ENCODE measurements at regions of chr15 and their contacts with region 1.

Region 1: GRCh38 chr15:66851226-66852071 is 149.4 kb downstream of the SMAD6 start:
- DNase-seq: peak; percentile 86
- H3K4me3 ChIP-seq: no peak overlapping the region
- H3K27ac ChIP-seq: peak overlapping the region in 3 of 4 donors; percentile 39 to 55 (median 49)
- H3K4me1 ChIP-seq: peaks cover 7 to 22% (median 12%) of the 10 kb centered on the region in 4 donors
- H3K27me3 ChIP-seq: no peaks in the 10 kb centered on the region
- CTCF ChIP-seq: peak; percentile 96 to 98 (median 97)
- EP300 ChIP-seq: no peak
- POLR2A ChIP-seq: no peak

Region 2: GRCh38 chr15:66535016-66535415 is 316.4 kb before region 1 on chr15:
- in situ Hi-C with region 1: no loop called
- intact Hi-C with region 1: no loop called
- DNase-seq: no peak
- H3K4me3 ChIP-seq: no peak overlapping the region
- H3K27ac ChIP-seq: no peak overlapping the region
- H3K4me1 ChIP-seq: peaks cover 0 to 8% (median 0%) of the 10 kb centered on the region in 4 donors
- H3K27me3 ChIP-seq: no peaks in the 10 kb centered on the region
- CTCF ChIP-seq: no peak
- EP300 ChIP-seq: no peak
- POLR2A ChIP-seq: no peak

Region 3: GRCh38 chr15:66595931-66596545 is 255.4 kb before region 1 on chr15:
- in situ Hi-C with region 1: loop called in 2 of 4 experiments (anchors 10 kb)
- intact Hi-C with region 1: loop called (anchors 5 kb)
- DNase-seq: no peak
- H3K4me3 ChIP-seq: no peak overlapping the region
- H3K27ac ChIP-seq: no peak overlapping the region
- H3K4me1 ChIP-seq: no peaks in the 10 kb centered on the region
- H3K27me3 ChIP-seq: no peaks in the 10 kb centered on the region
- CTCF ChIP-seq: no peak
- EP300 ChIP-seq: no peak
- POLR2A ChIP-seq: no peak

Region 4: GRCh38 chr15:66603301-66604179 is 247.9 kb before region 1 on chr15:
- in situ Hi-C with region 1: loop called in 2 of 4 experiments (anchors 10 kb)
- intact Hi-C with region 1: loop called (anchors 5 kb)
- DNase-seq: peak; percentile 67
- H3K4me3 ChIP-seq: no peak overlapping the region
- H3K27ac ChIP-seq: no peak overlapping the region
- H3K4me1 ChIP-seq: no peaks in the 10 kb centered on the region
- H3K27me3 ChIP-seq: no peaks in the 10 kb centered on the region
- CTCF ChIP-seq: peak; percentile 68 to 87 (median 83)
- EP300 ChIP-seq: no peak
- POLR2A ChIP-seq: no peak

Region 5: GRCh38 chr15:66619151-66619903 is 232.1 kb before region 1 on chr15:
- in situ Hi-C with region 1: no loop called
- intact Hi-C with region 1: loop called (anchors 5 kb)
- DNase-seq: peak; percentile 84
- H3K4me3 ChIP-seq: no peak overlapping the region
- H3K27ac ChIP-seq: peak overlapping the region; percentile 8 to 82 (median 58)
- H3K4me1 ChIP-seq: peaks cover 10 to 52% (median 36%) of the 10 kb centered on the region in 4 donors
- H3K27me3 ChIP-seq: peaks cover 6% of the 10 kb centered on the region
- CTCF ChIP-seq: peak; percentile 86 to 94 (median 92)
- EP300 ChIP-seq: no peak
- POLR2A ChIP-seq: no peak

Region 6: GRCh38 chr15:66700802-66701421 is 150.5 kb before region 1 on chr15:
- in situ Hi-C with region 1: no loop called
- intact Hi-C with region 1: loop called (anchors 5 kb)
- DNase-seq: peak; percentile 97
- H3K4me3 ChIP-seq: peak overlapping the region; percentile 59 to 78 (median 73)
- H3K27ac ChIP-seq: peak overlapping the region; percentile 84 to 92 (median 91)
- H3K4me1 ChIP-seq: peaks cover 3 to 39% (median 31%) of the 10 kb centered on the region in 4 donors
- H3K27me3 ChIP-seq: no peaks in the 10 kb centered on the region
- CTCF ChIP-seq: no peak
- EP300 ChIP-seq: no peak
- POLR2A ChIP-seq: no peak

Region 7: GRCh38 chr15:66774001-66774814 is 77.2 kb before region 1 on chr15:
- in situ Hi-C with region 1: no loop called
- intact Hi-C with region 1: loop called (anchors 5 kb)
- DNase-seq: peak; percentile 91
- H3K4me3 ChIP-seq: no peak overlapping the region
- H3K27ac ChIP-seq: peak overlapping the region; percentile 77 to 82 (median 78)
- H3K4me1 ChIP-seq: peaks cover 34 to 69% (median 56%) of the 10 kb centered on the region in 4 donors
- H3K27me3 ChIP-seq: no peaks in the 10 kb centered on the region
- CTCF ChIP-seq: peak; percentile 95 to 99 (median 97)
- EP300 ChIP-seq: no peak
- POLR2A ChIP-seq: no peak

Measured in transverse colon (tissue), 4 donors.